Adrenal gland (tissue), 19 donors: ENCODE measurements at regions of chr11 and their contacts with region 1.

Region 1: DNA sequence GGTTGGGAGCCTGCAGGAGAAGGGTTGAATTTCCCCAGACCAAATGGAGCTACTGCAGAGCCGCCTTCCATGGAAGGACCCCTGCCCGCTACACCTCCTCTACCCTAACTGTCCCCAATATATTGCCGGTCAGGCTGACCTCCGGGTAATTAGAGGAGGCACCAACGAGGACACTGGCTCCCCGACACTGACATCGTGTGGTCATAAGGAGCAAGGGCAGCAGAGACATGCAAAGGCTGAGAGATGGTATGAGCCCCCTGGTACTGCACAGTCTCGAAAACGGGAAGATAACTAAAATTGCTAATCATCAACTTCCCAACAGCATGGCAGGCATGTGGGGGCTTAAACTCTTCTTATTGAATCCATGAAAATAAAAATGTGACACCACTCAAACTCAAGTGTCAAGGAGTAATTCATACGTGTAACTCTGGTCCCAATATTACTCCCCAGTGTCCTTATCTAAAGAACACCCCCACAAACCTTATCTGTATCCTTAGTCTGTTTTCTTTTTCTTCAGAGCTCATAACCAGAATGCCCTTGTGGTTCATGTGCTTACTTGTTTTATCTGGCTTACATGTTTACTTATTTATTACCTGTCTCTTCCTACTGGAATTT is 4.4 kb downstream of the CAVIN3 start:
- DNase-seq: peak; percentile 48 to 78 (median 68)
- H3K4me3 ChIP-seq: no peak overlapping the region
- H3K27ac ChIP-seq: no peak overlapping the region
- H3K4me1 ChIP-seq: peaks cover 11 to 18% of the 10 kb centered on the region in 2 donors
- H3K27me3 ChIP-seq: no peaks in the 10 kb centered on the region
- CTCF ChIP-seq: peak; percentile 71 to 82 (median 80)
- POLR2A ChIP-seq: no peak

Region 2: GRCh38 chr11:6251120-6251733 is 64.7 kb before region 1 on chr11:
- intact Hi-C with region 1: no loop called
- DNase-seq: peak; percentile 61 to 92 (median 76)
- H3K4me3 ChIP-seq: no peak overlapping the region
- H3K27ac ChIP-seq: peak overlapping the region; percentile 48 to 91 (median 85)
- H3K4me1 ChIP-seq: peaks cover 20 to 21% of the 10 kb centered on the region in 2 donors
- H3K27me3 ChIP-seq: no peaks in the 10 kb centered on the region
- CTCF ChIP-seq: peak; percentile 69 to 97 (median 83)
- POLR2A ChIP-seq: no peak

Region 3: DNA sequence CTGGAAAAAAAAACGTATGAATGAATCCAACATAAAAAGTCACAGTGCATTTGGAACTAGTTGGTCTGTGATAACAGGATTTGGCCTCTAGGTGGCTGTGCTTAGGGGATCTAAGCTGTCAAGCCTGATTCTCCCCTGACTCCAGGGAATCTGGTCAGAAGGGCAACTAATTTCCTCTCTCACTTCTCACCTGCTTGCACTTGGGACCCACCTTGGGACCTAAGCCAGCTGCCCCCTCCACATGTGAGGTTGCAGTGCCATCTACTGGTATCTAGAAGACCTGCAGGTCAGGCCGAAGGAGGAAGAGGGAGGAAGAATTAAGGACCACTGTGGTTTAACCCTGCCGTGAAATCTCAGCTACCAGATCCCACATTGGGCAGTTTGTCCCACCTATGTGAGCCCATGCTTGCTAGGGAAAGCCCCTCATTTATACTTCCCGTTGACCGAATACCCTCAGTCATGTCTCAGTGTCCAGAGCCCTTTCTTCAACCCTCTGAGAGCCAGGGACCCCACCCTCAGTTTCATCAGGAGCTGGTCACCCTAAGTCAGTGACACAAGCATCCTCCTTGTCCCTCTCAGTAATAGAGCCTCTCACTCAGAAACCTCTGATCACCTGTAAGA is 37.6 kb after region 1 on chr11:
- intact Hi-C with region 1: loop called in 1 of 2 experiments (anchors 5 kb)
- DNase-seq: peak; percentile 16 to 68 (median 48)
- H3K4me3 ChIP-seq: no peak overlapping the region
- H3K27ac ChIP-seq: no peak overlapping the region
- H3K4me1 ChIP-seq: peaks cover 0 to 9% of the 10 kb centered on the region in 2 donors
- H3K27me3 ChIP-seq: no peaks in the 10 kb centered on the region
- CTCF ChIP-seq: peak; percentile 75 to 97 (median 94)
- POLR2A ChIP-seq: no peak